ENCODE measurements at regions of chr1 and their contacts with region 1.

Region 1: GRCh38 chr1:6602669-6603237 is at the start of gene KLHL21:
- DNase-seq: peak; percentile 76
- H3K4me3 Mint-ChIP-seq: peak within 1 kb of the TSS; percentile 86
- H3K27ac Mint-ChIP-seq: peak within 1 kb of the TSS; percentile 98
- H3K4me1 Mint-ChIP-seq: peaks cover 33% of the 10 kb centered on the region
- H3K27me3 Mint-ChIP-seq: no peaks in the 10 kb centered on the region
- total RNA-seq, gene KLHL21: 17.3 to 20.0 TPM

Region 2: DNA sequence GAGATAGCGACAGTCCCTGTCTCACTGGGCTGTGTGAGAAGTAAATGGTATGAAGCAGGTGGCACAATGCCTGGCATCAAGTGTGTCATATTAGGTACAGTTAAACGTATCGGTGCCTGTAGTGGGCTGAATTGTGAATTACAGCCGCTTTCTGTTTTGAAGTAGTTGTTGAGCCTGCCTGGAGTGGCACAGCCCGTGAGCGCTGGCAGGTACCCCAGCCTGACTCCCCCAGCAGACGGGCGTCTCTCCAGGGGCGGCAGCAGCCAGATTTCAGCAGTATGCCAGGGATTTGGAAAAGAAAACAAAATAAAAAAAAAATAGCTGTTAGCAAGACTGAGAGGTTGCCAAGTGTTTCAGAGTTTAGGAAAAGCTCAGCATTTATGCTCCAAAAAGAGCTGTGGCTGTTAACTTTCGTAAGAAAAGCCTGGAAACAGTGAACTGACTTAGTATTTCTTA is 315.3 kb before region 1 on chr1:
- CTCF ChIA-PET with region 1: no interaction called
- POLR2A ChIA-PET with region 1: no interaction called
- DNase-seq: no peak
- H3K4me3 Mint-ChIP-seq: no peak overlapping the region
- H3K27ac Mint-ChIP-seq: no peak overlapping the region
- H3K4me1 Mint-ChIP-seq: no peaks in the 10 kb centered on the region
- H3K27me3 Mint-ChIP-seq: no peaks in the 10 kb centered on the region

Region 3: DNA sequence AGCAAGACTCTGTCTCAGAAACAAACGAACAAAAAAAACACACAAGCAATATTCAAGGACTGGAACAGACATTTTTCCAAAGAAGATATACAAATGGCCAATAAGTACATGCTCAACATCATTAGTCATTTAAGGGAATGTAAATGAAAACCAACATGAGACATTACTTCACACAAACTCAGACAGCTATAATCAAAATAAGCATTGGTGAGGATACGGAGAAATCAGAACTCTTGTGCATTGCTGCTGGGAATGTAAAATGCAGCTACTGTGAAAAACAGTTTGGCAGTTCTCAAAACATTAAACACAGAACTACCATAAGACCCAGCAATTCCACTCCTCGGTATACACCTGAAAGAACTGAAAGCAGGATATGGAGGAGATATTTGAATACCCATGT is 63.8 kb before region 1 on chr1:
- CTCF ChIA-PET with region 1: no interaction called
- POLR2A ChIA-PET with region 1: no interaction called
- DNase-seq: no peak
- H3K4me3 Mint-ChIP-seq: no peak overlapping the region
- H3K27ac Mint-ChIP-seq: no peak overlapping the region
- H3K4me1 Mint-ChIP-seq: peaks cover 3% of the 10 kb centered on the region
- H3K27me3 Mint-ChIP-seq: no peaks in the 10 kb centered on the region

Region 4: DNA sequence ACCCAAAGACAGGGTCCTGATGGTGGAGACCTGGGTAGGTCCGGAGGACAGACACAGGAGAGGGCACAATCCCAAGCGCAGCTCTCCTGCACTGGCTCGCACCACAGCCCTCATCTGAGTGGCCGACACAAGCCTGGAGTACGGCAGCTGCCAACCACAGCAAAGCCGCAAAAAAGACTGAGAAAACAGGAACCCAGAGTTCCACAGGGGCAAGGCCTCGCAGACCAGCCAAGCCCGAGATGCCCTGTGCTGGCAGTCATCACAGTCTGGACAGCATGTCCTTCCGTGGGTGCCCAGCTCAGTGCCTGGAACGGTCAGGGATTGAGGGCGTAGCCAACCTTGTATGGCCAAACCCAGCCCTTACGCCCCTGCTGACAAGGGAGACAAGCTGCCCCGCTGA is 11.5 kb before region 1 on chr1:
- CTCF ChIA-PET with region 1: interaction called, 13 read pairs
- POLR2A ChIA-PET with region 1: no interaction called
- DNase-seq: no peak
- H3K4me3 Mint-ChIP-seq: no peak overlapping the region
- H3K27ac Mint-ChIP-seq: peak overlapping the region; percentile 28
- H3K4me1 Mint-ChIP-seq: peaks cover 33% of the 10 kb centered on the region
- H3K27me3 Mint-ChIP-seq: no peaks in the 10 kb centered on the region

Region 5: DNA sequence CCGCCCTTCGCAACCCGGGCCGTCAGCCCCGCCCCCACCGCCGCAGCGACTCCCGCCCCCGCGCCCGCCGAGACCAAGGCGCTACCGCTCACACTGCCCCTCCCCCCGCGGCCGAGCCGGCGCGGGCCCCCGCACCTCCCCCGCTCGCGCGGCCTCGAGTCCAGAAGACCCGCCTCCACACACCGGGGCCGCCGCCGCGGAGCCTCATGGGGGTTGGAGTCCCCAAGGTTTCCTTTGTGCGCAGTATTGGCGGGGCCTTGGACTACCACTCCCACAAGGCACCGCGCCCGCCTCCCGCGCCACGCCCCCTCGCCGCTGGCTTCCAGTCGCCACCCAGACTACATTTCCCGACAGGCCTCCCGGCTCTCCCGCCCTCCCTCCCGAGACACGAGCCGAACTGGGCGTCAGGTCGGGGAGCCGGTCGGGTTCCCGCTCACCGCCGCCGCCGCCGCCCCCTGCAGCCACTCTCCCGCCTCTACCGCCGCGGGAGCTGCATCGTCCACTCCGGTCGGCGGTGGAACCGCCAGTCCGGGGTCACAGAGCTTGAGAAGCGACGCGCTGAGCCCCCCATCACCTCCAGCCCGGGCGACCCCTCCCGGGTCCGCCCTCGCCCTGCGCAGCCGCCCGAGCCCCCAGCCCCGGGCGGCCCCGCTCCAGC is 10.7 kb after region 1 on chr1 and contains the start of gene PHF13:
- CTCF ChIA-PET with region 1: interaction called, 10 read pairs
- POLR2A ChIA-PET with region 1: no interaction called
- DNase-seq: peak; percentile 99
- H3K4me3 Mint-ChIP-seq: peak within 1 kb of the TSS; percentile 92
- H3K27ac Mint-ChIP-seq: peak within 1 kb of the TSS; percentile 90
- H3K4me1 Mint-ChIP-seq: peaks cover 26% of the 10 kb centered on the region
- H3K27me3 Mint-ChIP-seq: peaks cover 7% of the 10 kb centered on the region
- total RNA-seq, gene PHF13: 12.4 to 12.5 TPM

Region 6: GRCh38 chr1:6628971-6629479 is 26.3 kb after region 1 on chr1:
- CTCF ChIA-PET with region 1: no interaction called
- POLR2A ChIA-PET with region 1: no interaction called
- DNase-seq: no peak
- H3K4me3 Mint-ChIP-seq: no peak overlapping the region
- H3K27ac Mint-ChIP-seq: no peak overlapping the region
- H3K4me1 Mint-ChIP-seq: peaks cover 30% of the 10 kb centered on the region
- H3K27me3 Mint-ChIP-seq: no peaks in the 10 kb centered on the region